Activated naive CD4-positive, alpha-beta T cell treated with anti-CD3 and anti-CD28 coated beads, Interleukin-2, amount 10 ng/mL, durations not matched to agents 7 days and 5 days (primary cell): ENCODE measurements at regions of chr1 and their contacts with region 1.

Region 1: GRCh38 chr1:23809751-23810171 is 9.2 kb upstream of the GALE start:
- DNase-seq: peak; percentile 91
- H3K4me3 Mint-ChIP-seq: no peak overlapping the region
- H3K27ac Mint-ChIP-seq: peak overlapping the region; percentile 60
- H3K4me1 Mint-ChIP-seq: peaks cover 21% of the 10 kb centered on the region
- H3K27me3 Mint-ChIP-seq: no peaks in the 10 kb centered on the region

Region 2: GRCh38 chr1:23732363-23733224 is 77.2 kb before region 1 on chr1:
- CTCF ChIA-PET with region 1: no interaction called
- DNase-seq: no peak
- H3K4me3 Mint-ChIP-seq: no peak overlapping the region
- H3K27ac Mint-ChIP-seq: no peak overlapping the region
- H3K4me1 Mint-ChIP-seq: no peaks in the 10 kb centered on the region
- H3K27me3 Mint-ChIP-seq: no peaks in the 10 kb centered on the region

Region 3: GRCh38 chr1:23772049-23772853 is 37.5 kb before region 1 on chr1:
- CTCF ChIA-PET with region 1: interaction called, 16 read pairs
- DNase-seq: peak; percentile 92
- H3K4me3 Mint-ChIP-seq: no peak overlapping the region
- H3K27ac Mint-ChIP-seq: no peak overlapping the region
- H3K4me1 Mint-ChIP-seq: peaks cover 31% of the 10 kb centered on the region
- H3K27me3 Mint-ChIP-seq: no peaks in the 10 kb centered on the region

Region 4: GRCh38 chr1:23825076-23825761 is 15.5 kb after region 1 on chr1 and contains the start of gene HMGCL:
- CTCF ChIA-PET with region 1: interaction called, 26 read pairs
- DNase-seq: peak; percentile 94
- H3K4me3 Mint-ChIP-seq: peak within 1 kb of the TSS; percentile 95
- H3K27ac Mint-ChIP-seq: peak within 1 kb of the TSS; percentile 91
- H3K4me1 Mint-ChIP-seq: peaks cover 25% of the 10 kb centered on the region
- H3K27me3 Mint-ChIP-seq: peaks cover 4% of the 10 kb centered on the region

Region 5: DNA sequence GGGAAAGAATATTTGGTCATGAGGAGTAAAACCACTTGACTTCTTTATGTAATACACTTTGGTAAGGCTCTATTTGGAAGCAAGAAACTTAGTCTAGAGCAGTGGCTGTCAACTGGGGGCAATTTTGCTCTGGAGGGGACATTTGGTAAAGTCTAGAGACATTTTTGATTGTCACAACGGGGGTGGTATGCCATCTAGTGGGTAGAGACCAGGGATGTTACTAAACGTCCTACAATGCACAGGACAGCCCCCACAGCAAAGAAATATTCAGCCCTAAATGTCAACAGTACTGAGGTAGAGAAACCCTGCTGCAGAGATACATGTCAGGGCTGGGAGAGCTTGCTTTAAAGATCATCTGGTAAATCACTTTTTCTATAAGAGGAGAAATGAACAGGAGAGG is 44.8 kb after region 1 on chr1:
- CTCF ChIA-PET with region 1: interaction called, 21 read pairs
- DNase-seq: peak; percentile 27
- H3K4me3 Mint-ChIP-seq: no peak overlapping the region
- H3K27ac Mint-ChIP-seq: no peak overlapping the region
- H3K4me1 Mint-ChIP-seq: no peaks in the 10 kb centered on the region
- H3K27me3 Mint-ChIP-seq: no peaks in the 10 kb centered on the region

Region 6: GRCh38 chr1:23916209-23917131 is 106.7 kb after region 1 on chr1:
- CTCF ChIA-PET with region 1: interaction called, 81 read pairs
- DNase-seq: peak; percentile 78
- H3K4me3 Mint-ChIP-seq: no peak overlapping the region
- H3K27ac Mint-ChIP-seq: no peak overlapping the region
- H3K4me1 Mint-ChIP-seq: peaks cover 34% of the 10 kb centered on the region
- H3K27me3 Mint-ChIP-seq: peaks cover 16% of the 10 kb centered on the region

Region 7: GRCh38 chr1:24027838-24028468 is 218.2 kb after region 1 on chr1:
- CTCF ChIA-PET with region 1: interaction called, 13 read pairs
- DNase-seq: no peak
- H3K4me3 Mint-ChIP-seq: no peak overlapping the region
- H3K27ac Mint-ChIP-seq: no peak overlapping the region
- H3K4me1 Mint-ChIP-seq: no peaks in the 10 kb centered on the region
- H3K27me3 Mint-ChIP-seq: peaks cover 6% of the 10 kb centered on the region